CD14-positive monocyte (primary cell): ENCODE measurements at regions of chr6 and their contacts with region 1.

Region 1: DNA sequence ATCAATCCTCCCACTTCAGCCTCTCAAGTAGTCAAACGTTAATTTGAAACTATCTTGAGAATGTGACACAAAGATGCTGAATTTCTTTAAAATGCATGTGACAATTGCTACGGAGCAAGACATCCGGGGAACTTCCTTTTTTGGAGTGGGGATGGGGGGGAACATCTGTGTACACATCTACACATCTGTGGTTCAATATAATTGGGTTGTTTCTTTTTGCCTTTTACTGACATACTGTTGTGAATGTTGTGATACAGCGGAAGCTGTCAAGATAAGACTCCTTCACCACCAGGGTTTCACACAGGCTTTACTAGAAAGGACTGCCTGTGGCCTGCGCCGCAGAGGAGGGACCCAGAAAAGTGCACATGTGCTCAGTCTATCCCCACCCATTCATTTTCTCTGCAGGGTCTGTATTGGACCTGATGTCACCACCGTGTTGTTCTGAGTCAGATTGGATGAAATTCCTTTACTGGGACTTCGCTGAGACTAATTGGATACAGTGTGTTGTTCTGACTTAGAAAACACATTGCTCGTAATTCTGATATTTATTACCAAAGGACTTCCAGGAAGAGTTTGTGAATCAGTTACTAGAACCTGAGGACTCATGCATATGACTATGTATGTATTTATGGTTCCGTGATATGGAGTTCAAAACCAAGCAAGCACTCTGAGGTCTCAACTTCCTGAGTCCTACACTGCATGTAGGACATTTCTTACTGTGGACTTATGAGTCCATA is 98.7 kb upstream of the SGK1 start:
- DNase-seq: peak; percentile 29 to 45 (median 38)
- H3K4me3 ChIP-seq: no peak overlapping the region
- H3K4me3 Mint-ChIP-seq: no peak overlapping the region
- H3K27ac ChIP-seq: peak overlapping the region in 1 of 2 donors; percentile 98
- H3K27ac Mint-ChIP-seq: peak overlapping the region in 6 of 7 donors; percentile 56 to 100 (median 94)
- H3K4me1 ChIP-seq: peaks cover 49 to 51% of the 10 kb centered on the region in 2 donors
- H3K4me1 Mint-ChIP-seq: peaks cover 55% of the 10 kb centered on the region
- H3K27me3 ChIP-seq: no peaks in the 10 kb centered on the region
- H3K27me3 Mint-ChIP-seq: peaks cover 2 to 5% (median 2%) of the 10 kb centered on the region in 3 donors
- CTCF ChIP-seq: no peak

Region 2: GRCh38 chr6:134295953-134296553 is 120.5 kb before region 1 on chr6:
- intact Hi-C with region 1: loop called in 1 of 2 experiments (anchors 10 kb)
- DNase-seq: peak; percentile 92 to 99 (median 99)
- H3K4me3 ChIP-seq: peak overlapping the region in 1 of 3 experiments; percentile 10
- H3K4me3 Mint-ChIP-seq: no peak overlapping the region
- H3K27ac ChIP-seq: peak overlapping the region; percentile 94 to 95
- H3K27ac Mint-ChIP-seq: peak overlapping the region; percentile 96 to 100 (median 99)
- H3K4me1 ChIP-seq: peaks cover 27 to 29% of the 10 kb centered on the region in 2 donors
- H3K4me1 Mint-ChIP-seq: peaks cover 32% of the 10 kb centered on the region
- H3K27me3 ChIP-seq: no peaks in the 10 kb centered on the region
- H3K27me3 Mint-ChIP-seq: peaks cover 0 to 2% (median 1%) of the 10 kb centered on the region in 3 donors
- CTCF ChIP-seq: no peak

Region 3: DNA sequence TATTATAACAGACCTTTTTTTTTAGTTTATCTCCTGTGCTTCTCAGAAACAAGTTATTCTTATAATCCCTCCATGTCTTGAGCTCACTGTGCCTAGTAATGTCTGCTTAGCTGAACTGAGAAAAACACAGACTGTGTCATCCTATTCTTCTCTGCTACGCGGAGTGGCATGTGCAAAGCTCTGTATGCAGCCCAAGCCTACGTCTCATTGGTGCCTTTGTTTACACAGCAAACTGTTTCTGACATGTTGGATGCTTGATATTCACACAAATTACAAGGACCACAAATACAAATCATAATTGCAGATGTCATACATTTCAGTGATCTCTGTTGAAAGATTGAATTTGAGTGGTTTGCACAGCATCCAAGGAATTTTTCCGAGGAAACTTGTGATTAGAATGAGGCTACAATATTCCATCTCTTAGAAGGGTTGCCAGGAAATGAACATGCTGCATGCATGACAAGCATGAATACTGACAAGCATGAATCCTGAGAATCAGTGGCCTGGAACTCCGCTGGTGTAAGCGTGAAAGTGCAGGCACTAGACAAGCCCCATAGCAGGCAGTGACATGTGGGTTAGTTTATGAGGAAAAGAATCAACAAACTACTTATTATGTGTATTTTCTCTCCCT is 29.7 kb after region 1 on chr6:
- intact Hi-C with region 1: loop called in 1 of 2 experiments (anchors 5 kb)
- DNase-seq: no peak
- H3K4me3 ChIP-seq: no peak overlapping the region
- H3K4me3 Mint-ChIP-seq: no peak overlapping the region
- H3K27ac ChIP-seq: no peak overlapping the region
- H3K27ac Mint-ChIP-seq: peak overlapping the region in 5 of 7 donors; percentile 1 to 77 (median 67)
- H3K4me1 ChIP-seq: peaks cover 14 to 18% of the 10 kb centered on the region in 2 donors
- H3K4me1 Mint-ChIP-seq: peaks cover 22% of the 10 kb centered on the region
- H3K27me3 ChIP-seq: no peaks in the 10 kb centered on the region
- H3K27me3 Mint-ChIP-seq: peaks cover 0 to 1% (median 0%) of the 10 kb centered on the region in 3 donors
- CTCF ChIP-seq: no peak

Region 4: GRCh38 chr6:134517145-134517658 is 100.6 kb after region 1 on chr6:
- intact Hi-C with region 1: no loop called
- DNase-seq: peak; percentile 34 to 57 (median 50)
- H3K4me3 ChIP-seq: no peak overlapping the region
- H3K4me3 Mint-ChIP-seq: peak overlapping the region in 1 of 2 donors; percentile 7
- H3K27ac ChIP-seq: peak overlapping the region in 1 of 2 donors; percentile 64
- H3K27ac Mint-ChIP-seq: peak overlapping the region; percentile 73 to 92 (median 88)
- H3K4me1 ChIP-seq: peaks cover 33 to 40% of the 10 kb centered on the region in 2 donors
- H3K4me1 Mint-ChIP-seq: peaks cover 50% of the 10 kb centered on the region
- H3K27me3 ChIP-seq: no peaks in the 10 kb centered on the region
- H3K27me3 Mint-ChIP-seq: no peaks in the 10 kb centered on the region
- CTCF ChIP-seq: no peak

Region 5: DNA sequence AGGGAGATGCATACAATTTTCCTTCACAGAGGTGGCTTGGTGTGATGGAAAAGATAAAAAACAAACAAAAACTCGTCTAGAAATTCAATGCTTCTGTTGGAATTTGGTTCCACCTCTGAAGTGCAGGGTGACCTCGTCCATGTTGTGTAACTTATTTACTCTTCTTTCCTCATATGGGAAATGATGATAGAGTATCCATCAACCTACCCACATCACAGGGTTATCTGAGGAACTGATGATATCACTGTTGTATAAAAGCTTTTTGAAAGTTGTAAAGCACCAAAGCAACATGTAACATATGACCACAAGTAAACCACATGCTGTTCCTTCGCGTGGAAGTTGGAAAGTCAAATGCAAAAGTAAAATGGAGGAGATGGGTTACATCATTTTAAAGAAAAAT is 113.3 kb after region 1 on chr6:
- intact Hi-C with region 1: no loop called
- DNase-seq: peak; percentile 78 to 87 (median 82)
- H3K4me3 ChIP-seq: no peak overlapping the region
- H3K4me3 Mint-ChIP-seq: no peak overlapping the region
- H3K27ac ChIP-seq: peak overlapping the region in 1 of 2 donors; percentile 1
- H3K27ac Mint-ChIP-seq: peak overlapping the region; percentile 48 to 94 (median 83)
- H3K4me1 ChIP-seq: peaks cover 3 to 5% of the 10 kb centered on the region in 2 donors
- H3K4me1 Mint-ChIP-seq: peaks cover 16% of the 10 kb centered on the region
- H3K27me3 ChIP-seq: no peaks in the 10 kb centered on the region
- H3K27me3 Mint-ChIP-seq: peaks cover 0 to 3% (median 2%) of the 10 kb centered on the region in 3 donors
- CTCF ChIP-seq: no peak